ENCODE measurements at regions of chr15 and their contacts with region 1.

Region 1: GRCh38 chr15:88894348-88894818 is 961 bp downstream of the HAPLN3 start:
- DNase-seq: peak; percentile 88
- ATAC-seq: peak; percentile 58
- H3K4me3 Mint-ChIP-seq: peak overlapping the region; percentile 87
- H3K27ac Mint-ChIP-seq: peak overlapping the region; percentile 78
- H3K4me1 Mint-ChIP-seq: peaks cover 32% of the 10 kb centered on the region
- H3K27me3 Mint-ChIP-seq: no peaks in the 10 kb centered on the region

Region 2: GRCh38 chr15:88904624-88905327 is 10.4 kb after region 1 on chr15:
- POLR2A ChIA-PET with region 1: interaction called, 17 read pairs
- DNase-seq: peak; percentile 92
- ATAC-seq: peak; percentile 99
- H3K4me3 Mint-ChIP-seq: peak overlapping the region; percentile 36
- H3K27ac Mint-ChIP-seq: peak overlapping the region; percentile 82
- H3K4me1 Mint-ChIP-seq: peaks cover 21% of the 10 kb centered on the region
- H3K27me3 Mint-ChIP-seq: no peaks in the 10 kb centered on the region

Measured in activated naive CD8-positive, alpha-beta T cell treated with anti-CD3 and anti-CD28 coated beads, Interleukin-2, amount 10 ng/mL, durations not matched to agents 7 days and 5 days (primary cell).